B cell (primary cell): ENCODE measurements at regions of chr3 and their contacts with region 1.

Region 1: DNA sequence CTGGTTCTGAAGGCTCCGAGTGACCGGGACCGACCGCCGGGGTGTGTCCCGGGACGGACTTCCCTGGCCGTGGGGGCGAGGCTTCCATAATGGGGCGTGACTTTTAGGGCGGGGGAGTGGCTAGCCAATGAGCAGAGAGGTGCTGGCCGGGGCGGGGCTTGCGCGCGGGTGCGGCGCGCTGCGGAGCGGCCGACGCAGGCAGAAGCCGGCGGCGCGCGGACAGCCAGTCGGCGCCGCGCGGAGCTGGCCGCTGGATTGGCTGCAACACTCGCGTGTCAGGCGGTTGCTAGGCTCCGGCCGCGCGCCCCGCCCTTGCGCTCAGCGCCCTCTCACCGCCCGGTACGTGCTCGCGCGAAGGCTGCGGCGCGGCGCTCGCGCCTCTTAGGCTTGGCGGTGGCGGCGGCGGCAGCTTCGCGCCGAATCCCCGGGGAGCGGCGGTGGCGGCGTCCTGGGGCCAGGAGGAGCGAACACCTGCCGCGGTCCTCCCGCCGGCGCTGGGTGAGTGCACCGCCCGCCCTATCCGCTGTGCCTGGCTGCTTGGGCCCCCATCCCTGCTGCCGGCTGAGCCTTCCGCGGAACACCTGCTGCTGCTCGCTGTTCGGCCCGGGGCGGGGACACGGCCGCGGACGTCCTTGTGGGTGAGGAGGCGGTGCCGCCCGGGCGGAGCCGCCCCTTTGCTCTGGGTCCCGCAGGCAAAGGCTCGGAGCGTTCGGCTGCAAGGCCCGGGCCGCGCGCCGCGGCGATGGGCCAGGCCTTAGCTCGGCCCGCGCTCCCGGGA is at the start of gene DAG1:
- DNase-seq: peak; percentile 98
- ATAC-seq: peak; percentile 83
- H3K4me3 ChIP-seq: peak within 1 kb of the TSS; percentile 56 to 94 (median 70)
- H3K4me3 Mint-ChIP-seq: peak within 1 kb of the TSS; percentile 95
- H3K27ac ChIP-seq: peak within 1 kb of the TSS; percentile 90 to 94
- H3K27ac Mint-ChIP-seq: peak within 1 kb of the TSS; percentile 97
- H3K4me1 ChIP-seq: peaks cover 22 to 24% of the 10 kb centered on the region in 2 donors
- H3K4me1 Mint-ChIP-seq: peaks cover 21% of the 10 kb centered on the region
- H3K27me3 ChIP-seq: no peaks in the 10 kb centered on the region
- H3K27me3 Mint-ChIP-seq: no peaks in the 10 kb centered on the region
- CTCF ChIP-seq: no peak
- total RNA-seq, gene DAG1: 27.2 and 27.3 TPM in 2 replicates

Region 2: GRCh38 chr3:47781685-47782445 is 1688.3 kb before region 1 on chr3 and contains the start of gene SMARCC1:
- CTCF ChIA-PET with region 1: no interaction called
- POLR2A ChIA-PET with region 1: no interaction called
- intact Hi-C with region 1: loop called (anchors 5 kb)
- DNase-seq: peak; percentile 99
- ATAC-seq: peak; percentile 87
- H3K4me3 ChIP-seq: peak within 1 kb of the TSS; percentile 68 to 94 (median 78)
- H3K4me3 Mint-ChIP-seq: peak within 1 kb of the TSS; percentile 99
- H3K27ac ChIP-seq: peak within 1 kb of the TSS; percentile 91 to 96
- H3K27ac Mint-ChIP-seq: peak within 1 kb of the TSS; percentile 99
- H3K4me1 ChIP-seq: peaks cover 32 to 44% of the 10 kb centered on the region in 2 donors
- H3K4me1 Mint-ChIP-seq: peaks cover 39% of the 10 kb centered on the region
- H3K27me3 ChIP-seq: no peaks in the 10 kb centered on the region
- H3K27me3 Mint-ChIP-seq: no peaks in the 10 kb centered on the region
- CTCF ChIP-seq: no peak
- total RNA-seq, gene SMARCC1: 149 and 155 TPM in 2 replicates

Region 3: DNA sequence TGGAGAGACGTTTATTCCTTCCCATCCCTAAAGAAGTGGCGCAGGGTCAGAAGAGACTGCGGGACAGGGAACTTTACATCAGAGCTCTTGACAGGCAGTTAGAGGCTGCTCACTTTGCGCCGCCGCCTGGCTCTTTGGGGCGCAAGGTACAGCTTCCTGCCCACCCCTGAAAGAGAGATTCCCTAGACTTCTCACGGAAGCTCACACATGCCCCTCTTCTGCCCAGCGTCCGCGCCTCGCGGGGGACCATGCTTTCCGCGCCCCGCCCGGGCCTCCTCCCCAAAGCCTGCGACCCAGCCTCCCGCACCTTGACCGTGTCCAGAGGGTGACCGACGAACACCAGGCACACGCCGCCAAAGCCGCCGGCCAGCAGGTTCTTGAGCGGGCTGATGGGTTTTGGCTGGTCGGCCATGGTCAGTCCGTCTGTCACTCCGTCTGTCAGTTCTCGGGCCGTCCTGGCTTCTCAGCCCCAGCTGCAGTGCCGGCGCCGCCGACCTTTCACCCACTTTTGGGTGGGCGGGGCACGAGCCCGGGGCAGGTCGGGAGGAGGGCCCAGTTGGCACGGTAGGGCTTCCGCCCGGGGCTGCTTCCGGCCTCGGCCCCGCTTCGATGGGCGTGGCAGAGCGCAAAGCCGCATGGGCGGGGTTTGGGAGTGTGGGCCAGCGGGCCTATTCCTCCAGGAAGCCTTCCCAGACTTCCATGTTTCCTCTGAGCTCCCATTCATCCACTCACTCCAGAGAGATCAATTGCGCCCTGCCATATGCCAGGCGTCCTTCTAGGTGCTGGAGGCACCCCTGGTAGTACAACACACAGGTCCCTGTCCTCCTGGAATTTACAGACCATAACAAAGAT is 571.5 kb before region 1 on chr3 and contains the start of gene SLC25A20:
- CTCF ChIA-PET with region 1: no interaction called
- POLR2A ChIA-PET with region 1: no interaction called
- intact Hi-C with region 1: loop called (anchors 2 kb)
- DNase-seq: peak; percentile 88
- ATAC-seq: peak; percentile 99
- H3K4me3 ChIP-seq: peak within 1 kb of the TSS; percentile 24 to 86 (median 73)
- H3K4me3 Mint-ChIP-seq: peak within 1 kb of the TSS; percentile 95
- H3K27ac ChIP-seq: peak within 1 kb of the TSS; percentile 30 to 80
- H3K27ac Mint-ChIP-seq: peak within 1 kb of the TSS; percentile 83
- H3K4me1 ChIP-seq: peaks cover 24 to 29% of the 10 kb centered on the region in 2 donors
- H3K4me1 Mint-ChIP-seq: peaks cover 35% of the 10 kb centered on the region
- H3K27me3 ChIP-seq: no peaks in the 10 kb centered on the region
- H3K27me3 Mint-ChIP-seq: no peaks in the 10 kb centered on the region
- CTCF ChIP-seq: no peak
- total RNA-seq, gene SLC25A20: 11.6 and 12.2 TPM in 2 replicates

Region 4: GRCh38 chr3:49411968-49412631 is 58.0 kb before region 1 on chr3 and contains the starts of genes RHOA and TCTA:
- CTCF ChIA-PET with region 1: no interaction called
- POLR2A ChIA-PET with region 1: interaction called, 8 read pairs
- intact Hi-C with region 1: loop called (anchors 1 kb)
- DNase-seq: peak; percentile 100
- ATAC-seq: peak; percentile 77
- H3K4me3 ChIP-seq: peak within 1 kb of the TSS; percentile 74 to 96 (median 90)
- H3K4me3 Mint-ChIP-seq: peak within 1 kb of the TSS; percentile 96
- H3K27ac ChIP-seq: peak within 1 kb of the TSS; percentile 90 to 97
- H3K27ac Mint-ChIP-seq: peak within 1 kb of the TSS; percentile 96
- H3K4me1 ChIP-seq: peaks cover 71 to 83% of the 10 kb centered on the region in 2 donors
- H3K4me1 Mint-ChIP-seq: peaks cover 74% of the 10 kb centered on the region
- H3K27me3 ChIP-seq: no peaks in the 10 kb centered on the region
- H3K27me3 Mint-ChIP-seq: no peaks in the 10 kb centered on the region
- CTCF ChIP-seq: no peak
- total RNA-seq, gene RHOA: 298 and 306 TPM in 2 replicates
- total RNA-seq, gene TCTA: 46.4 and 49.3 TPM in 2 replicates

Region 5: DNA sequence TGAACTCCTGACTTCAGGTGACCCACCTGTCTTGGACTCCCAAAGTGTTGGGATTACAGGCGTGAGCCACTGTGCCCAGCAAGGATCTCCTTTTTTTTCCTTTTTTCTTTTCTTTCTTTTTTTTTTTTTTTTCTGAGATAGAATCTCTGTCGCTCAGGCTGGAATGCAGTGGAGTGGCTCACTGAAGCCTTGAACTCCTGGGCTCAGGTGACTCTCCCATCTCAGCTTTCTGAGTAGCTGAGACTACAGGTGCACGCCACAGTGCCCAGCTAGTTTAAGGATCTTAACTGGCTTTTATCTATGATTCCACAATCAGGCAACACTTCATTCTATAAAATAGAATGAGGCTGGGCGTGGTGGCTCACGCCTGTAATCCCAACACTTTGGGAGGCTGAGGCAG is 24.7 kb before region 1 on chr3:
- CTCF ChIA-PET with region 1: interaction called, 8 read pairs
- POLR2A ChIA-PET with region 1: interaction called, 3 read pairs
- intact Hi-C with region 1: loop called (anchors 1 kb)
- DNase-seq: no peak
- ATAC-seq: no peak
- H3K4me3 ChIP-seq: no peak overlapping the region
- H3K4me3 Mint-ChIP-seq: no peak overlapping the region
- H3K27ac ChIP-seq: no peak overlapping the region
- H3K27ac Mint-ChIP-seq: peak overlapping the region; percentile 26
- H3K4me1 ChIP-seq: peaks cover 18 to 27% of the 10 kb centered on the region in 2 donors
- H3K4me1 Mint-ChIP-seq: peaks cover 15% of the 10 kb centered on the region
- H3K27me3 ChIP-seq: no peaks in the 10 kb centered on the region
- H3K27me3 Mint-ChIP-seq: no peaks in the 10 kb centered on the region
- CTCF ChIP-seq: no peak

Region 6: GRCh38 chr3:49939858-49940666 is 469.9 kb after region 1 on chr3 and contains the start of gene RBM6:
- CTCF ChIA-PET with region 1: no interaction called
- POLR2A ChIA-PET with region 1: no interaction called
- intact Hi-C with region 1: loop called (anchors 2 kb)
- DNase-seq: peak; percentile 97
- ATAC-seq: peak; percentile 93
- H3K4me3 ChIP-seq: peak within 1 kb of the TSS; percentile 81 to 98 (median 90)
- H3K4me3 Mint-ChIP-seq: peak within 1 kb of the TSS; percentile 99
- H3K27ac ChIP-seq: peak within 1 kb of the TSS; percentile 89 to 95
- H3K27ac Mint-ChIP-seq: peak within 1 kb of the TSS; percentile 100
- H3K4me1 ChIP-seq: peaks cover 23 to 32% of the 10 kb centered on the region in 2 donors
- H3K4me1 Mint-ChIP-seq: peaks cover 36% of the 10 kb centered on the region
- H3K27me3 ChIP-seq: no peaks in the 10 kb centered on the region
- H3K27me3 Mint-ChIP-seq: no peaks in the 10 kb centered on the region
- CTCF ChIP-seq: no peak
- total RNA-seq, gene RBM6: 285 and 300 TPM in 2 replicates